Vagina (tissue), 2 donors: ENCODE measurements at regions of chr17 and their contacts with region 1.

Region 1: GRCh38 chr17:78226749-78227399 is 4.6 kb upstream of the TMEM235 start:
- DNase-seq: no peak
- H3K4me3 ChIP-seq: no peak overlapping the region
- H3K27ac ChIP-seq: no peak overlapping the region
- H3K4me1 ChIP-seq: no peaks in the 10 kb centered on the region
- H3K27me3 ChIP-seq: no peaks in the 10 kb centered on the region
- CTCF ChIP-seq: no peak
- POLR2A ChIP-seq: no peak

Region 2: DNA sequence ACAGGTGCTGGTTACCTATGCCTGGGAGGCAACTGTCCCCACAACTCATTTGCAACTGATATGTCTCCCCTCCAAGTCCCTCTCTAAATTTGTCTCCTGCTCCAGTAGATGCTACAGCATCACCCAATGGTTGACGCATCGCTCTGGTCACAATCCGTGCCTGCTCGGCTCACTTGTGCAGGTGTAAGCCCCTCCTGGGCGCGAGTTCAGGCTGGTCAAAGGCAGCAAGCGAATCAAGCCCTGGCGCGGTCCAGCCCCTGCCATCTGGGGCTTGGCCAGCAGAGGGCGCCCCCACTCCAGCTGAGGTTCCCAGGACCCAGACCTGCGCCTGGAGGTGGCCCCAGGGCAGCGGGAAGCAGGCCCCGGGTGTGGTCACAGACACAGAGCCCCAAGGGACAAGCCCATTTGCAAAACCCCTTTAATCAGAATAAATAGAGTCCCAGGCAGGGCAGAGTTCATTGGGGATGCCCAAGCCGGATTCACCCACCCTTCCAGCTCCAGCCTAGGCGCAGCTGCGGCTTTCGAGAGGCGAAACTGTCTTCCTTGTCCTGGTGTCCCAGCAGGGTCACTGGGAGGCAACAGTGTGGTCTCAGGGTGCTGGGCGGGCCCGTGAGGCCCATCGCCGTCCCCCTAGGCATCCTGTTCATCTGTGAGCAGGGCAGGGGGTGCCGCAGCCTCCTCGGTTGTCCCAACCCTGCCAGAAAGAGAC is 114.2 kb before region 1 on chr17:
- intact Hi-C with region 1: no loop called
- DNase-seq: no peak
- H3K4me3 ChIP-seq: no peak overlapping the region
- H3K27ac ChIP-seq: no peak overlapping the region
- H3K4me1 ChIP-seq: peaks cover 25% of the 10 kb centered on the region
- H3K27me3 ChIP-seq: no peaks in the 10 kb centered on the region
- CTCF ChIP-seq: peak; percentile 96 to 99 (median 99)
- POLR2A ChIP-seq: no peak

Region 3: DNA sequence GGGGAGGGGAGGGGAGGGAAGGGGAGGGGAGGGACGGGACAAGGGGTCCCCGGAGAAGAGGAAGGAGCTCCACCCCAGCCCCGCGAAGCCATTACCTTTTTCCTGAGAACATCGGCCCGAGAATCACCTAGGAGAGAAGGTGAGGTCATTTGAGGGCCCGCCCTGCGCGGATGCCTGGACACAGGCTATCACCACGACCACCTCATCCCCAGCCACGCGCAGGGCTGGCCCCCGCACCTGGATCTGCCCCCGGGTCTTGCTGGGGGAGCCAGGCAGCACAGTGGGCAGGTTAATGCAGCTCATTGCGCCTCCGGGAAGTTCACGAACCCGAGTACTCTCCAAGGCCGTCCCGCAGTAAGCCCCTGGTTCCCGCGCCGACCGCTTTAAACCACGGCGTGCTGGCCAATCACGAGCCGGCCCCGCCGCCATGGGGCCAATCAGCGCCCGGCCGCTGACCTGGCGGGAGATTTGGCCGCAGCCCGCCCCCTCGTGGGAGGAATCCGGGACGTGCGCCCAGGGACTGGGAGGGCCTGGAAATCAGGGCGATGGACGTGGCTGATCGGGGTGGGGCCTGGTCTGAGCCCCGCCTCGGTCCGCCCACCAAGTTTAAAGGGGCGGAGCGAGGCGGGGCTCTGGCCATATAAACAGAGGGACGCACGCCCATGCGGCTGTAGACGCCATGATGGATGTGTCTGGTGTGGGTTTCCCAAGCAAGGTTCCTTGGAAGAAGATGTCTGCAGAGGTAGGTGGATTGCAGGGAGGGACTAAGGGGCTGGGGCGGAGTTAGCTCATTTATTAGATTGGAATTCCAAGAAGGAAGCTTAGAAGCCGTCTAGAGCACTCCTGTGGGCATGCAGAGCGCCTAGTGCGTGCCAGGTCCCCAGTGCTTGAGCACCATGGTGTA is 39.9 kb before region 1 on chr17 and contains the starts of genes AFMID and TK1:
- intact Hi-C with region 1: loop called (anchors 1 kb)
- DNase-seq: peak in 1 of 2 donors; percentile 97
- H3K4me3 ChIP-seq: peak within 1 kb of the TSS; percentile 46 to 56
- H3K27ac ChIP-seq: peak within 1 kb of the TSS; percentile 73
- H3K4me1 ChIP-seq: peaks cover 26% of the 10 kb centered on the region
- H3K27me3 ChIP-seq: no peaks in the 10 kb centered on the region
- CTCF ChIP-seq: peak; percentile 58 to 81 (median 60)
- POLR2A ChIP-seq: peak in 1 of 2 donors; percentile 41
- total RNA-seq, gene AFMID: 47.6 TPM
- total RNA-seq, gene TK1: 3.7 TPM